Mammary epithelial cell (primary cell): ENCODE measurements at regions of chr9 and their contacts with region 1.

Region 1: GRCh38 chr9:82532504-82533180 is 530.3 kb downstream of the RASEF start:
- DNase-seq: peak; percentile 4
- H3K4me3 ChIP-seq: no peak overlapping the region
- H3K27ac ChIP-seq: no peak overlapping the region
- H3K4me1 ChIP-seq: no peaks in the 10 kb centered on the region
- H3K27me3 ChIP-seq: no peaks in the 10 kb centered on the region
- CTCF ChIP-seq: peak; percentile 24 to 52

Region 2: DNA sequence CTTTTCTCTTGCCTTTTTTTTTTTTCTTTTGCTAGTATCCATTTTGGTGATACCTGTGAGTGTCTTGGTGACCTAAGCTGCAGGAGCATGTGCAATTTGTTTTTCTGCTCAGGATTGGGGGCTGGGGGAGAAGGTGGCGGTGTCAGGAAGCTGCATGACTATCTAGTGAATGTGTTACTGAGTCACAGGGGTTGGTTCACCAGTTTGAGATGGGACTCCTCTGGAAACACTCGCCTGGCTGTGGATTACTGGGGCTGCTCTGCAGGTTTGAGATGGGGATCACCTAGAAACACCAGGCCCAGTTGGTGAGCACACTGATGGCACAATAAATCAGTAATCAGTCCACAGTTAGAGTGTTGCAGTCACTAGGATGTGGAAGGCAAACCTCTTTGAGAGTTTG is 96.2 kb before region 1 on chr9:
- CTCF ChIA-PET with region 1: no interaction called
- dilution Hi-C with region 1: no loop called
- in situ Hi-C with region 1: loop called in 1 of 2 experiments (anchors 25 kb)
- intact Hi-C with region 1: no loop called
- DNase-seq: peak; percentile 70
- H3K4me3 ChIP-seq: no peak overlapping the region
- H3K27ac ChIP-seq: peak overlapping the region; percentile 35
- H3K4me1 ChIP-seq: peaks cover 9% of the 10 kb centered on the region
- H3K27me3 ChIP-seq: no peaks in the 10 kb centered on the region
- CTCF ChIP-seq: no peak

Region 3: GRCh38 chr9:82513242-82513751 is 19.3 kb before region 1 on chr9:
- CTCF ChIA-PET with region 1: no interaction called
- dilution Hi-C with region 1: no loop called
- in situ Hi-C with region 1: no loop called
- intact Hi-C with region 1: no loop called
- DNase-seq: no peak
- H3K4me3 ChIP-seq: no peak overlapping the region
- H3K27ac ChIP-seq: no peak overlapping the region
- H3K4me1 ChIP-seq: no peaks in the 10 kb centered on the region
- H3K27me3 ChIP-seq: no peaks in the 10 kb centered on the region
- CTCF ChIP-seq: no peak

Region 4: GRCh38 chr9:82606492-82607382 is 74.1 kb after region 1 on chr9:
- CTCF ChIA-PET with region 1: no interaction called
- dilution Hi-C with region 1: no loop called
- in situ Hi-C with region 1: no loop called
- intact Hi-C with region 1: loop called (anchors 1 kb)
- DNase-seq: peak; percentile 35
- H3K4me3 ChIP-seq: no peak overlapping the region
- H3K27ac ChIP-seq: no peak overlapping the region
- H3K4me1 ChIP-seq: no peaks in the 10 kb centered on the region
- H3K27me3 ChIP-seq: no peaks in the 10 kb centered on the region
- CTCF ChIP-seq: peak; percentile 52 to 66

Region 5: DNA sequence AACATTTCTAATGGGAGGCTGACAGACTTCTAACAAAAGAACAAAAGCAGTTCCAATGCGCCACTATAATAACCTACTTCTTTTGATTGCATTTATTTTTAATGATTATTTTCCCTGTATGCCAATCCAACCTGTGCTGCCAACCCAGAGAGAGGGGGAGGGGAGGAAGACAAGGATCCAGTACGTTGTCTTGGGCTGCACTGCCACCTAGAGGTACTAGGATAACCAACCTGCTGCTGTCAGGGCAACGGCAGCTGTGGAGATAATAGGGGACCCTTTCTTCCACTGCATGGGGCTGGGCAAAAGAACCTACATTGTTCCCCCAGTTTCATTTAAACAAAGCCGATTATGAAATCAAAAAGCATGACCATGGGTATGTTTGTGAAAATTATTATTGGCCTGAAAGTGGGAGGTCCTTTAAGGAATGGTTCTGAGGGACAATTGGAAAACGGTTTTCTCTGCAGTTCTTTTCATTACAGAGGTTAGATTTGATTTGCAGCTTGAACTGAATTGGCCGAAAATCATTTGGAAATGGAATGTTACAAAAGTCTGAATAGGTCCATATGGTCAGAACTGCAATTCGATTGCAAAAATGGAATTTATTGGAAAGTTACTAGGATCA is 429.0 kb after region 1 on chr9:
- CTCF ChIA-PET with region 1: interaction called, 6 read pairs
- dilution Hi-C with region 1: no loop called
- in situ Hi-C with region 1: no loop called
- intact Hi-C with region 1: loop called (anchors 1 kb)
- DNase-seq: peak; percentile 68
- H3K4me3 ChIP-seq: no peak overlapping the region
- H3K27ac ChIP-seq: no peak overlapping the region
- H3K4me1 ChIP-seq: no peaks in the 10 kb centered on the region
- H3K27me3 ChIP-seq: no peaks in the 10 kb centered on the region
- CTCF ChIP-seq: peak; percentile 74 to 91